ENCODE measurements at regions of chr3 and their contacts with region 1.

Region 1: GRCh38 chr3:98901392-98902350 is at the start of gene DCBLD2:
- DNase-seq: peak; percentile 93 to 99
- H3K4me3 ChIP-seq: peak within 1 kb of the TSS; percentile 90 to 94
- H3K27ac ChIP-seq: peak within 1 kb of the TSS; percentile 89 to 95
- H3K4me1 ChIP-seq: no peaks in the 10 kb centered on the region
- H3K27me3 ChIP-seq: no peaks in the 10 kb centered on the region
- CTCF ChIP-seq: no peak
- total RNA-seq, gene DCBLD2: 16.3 TPM

Region 2: DNA sequence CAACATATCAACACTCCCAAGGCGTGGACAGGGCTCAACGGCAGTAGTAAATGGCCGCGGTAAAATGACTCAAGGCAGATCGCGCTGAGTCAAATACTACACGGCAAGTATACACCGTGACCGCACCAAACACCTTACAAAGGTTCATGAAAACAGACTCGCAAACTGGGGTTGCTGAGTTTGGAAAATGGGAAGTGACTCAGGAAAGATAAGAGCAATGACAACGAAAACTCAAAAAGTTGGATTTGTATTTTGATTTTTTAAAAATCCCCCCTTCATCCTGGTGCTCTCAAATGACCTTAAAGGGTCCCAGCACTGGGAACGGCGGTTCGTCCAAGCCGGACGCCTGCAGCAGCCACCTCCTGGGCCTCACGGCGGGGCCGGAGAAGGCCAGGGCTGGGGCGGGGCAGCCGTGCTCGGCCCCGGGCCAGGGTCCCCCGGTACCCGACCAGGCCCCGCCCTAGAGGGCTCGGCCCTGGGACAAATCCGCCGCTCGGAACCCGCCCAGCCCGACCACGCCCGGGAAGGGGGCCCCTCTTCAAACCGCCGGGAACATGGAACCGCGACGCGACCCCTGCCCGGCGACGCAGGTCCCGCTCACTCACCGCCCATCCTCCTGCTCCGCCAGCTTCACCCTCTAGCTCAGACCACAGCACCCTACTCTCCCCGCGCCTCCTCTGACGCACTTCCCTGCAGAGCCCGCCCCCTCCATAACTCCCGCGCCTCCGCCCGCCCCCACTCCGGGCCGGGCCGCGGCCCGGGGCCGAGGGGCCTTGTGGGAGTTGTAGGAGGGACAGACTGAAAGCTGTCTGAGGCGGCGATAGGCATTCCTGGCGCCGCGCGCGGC is 379.2 kb before region 1 on chr3 and contains the start of gene CLDND1:
- intact Hi-C with region 1: loop called (anchors 2 kb)
- DNase-seq: peak; percentile 95 to 99
- H3K4me3 ChIP-seq: peak within 1 kb of the TSS; percentile 75 to 93
- H3K27ac ChIP-seq: peak within 1 kb of the TSS; percentile 92 to 95
- H3K4me1 ChIP-seq: peaks cover 0 to 2% of the 10 kb centered on the region in 2 donors
- H3K27me3 ChIP-seq: no peaks in the 10 kb centered on the region
- CTCF ChIP-seq: no peak
- total RNA-seq, gene CLDND1: 171 TPM

Region 3: DNA sequence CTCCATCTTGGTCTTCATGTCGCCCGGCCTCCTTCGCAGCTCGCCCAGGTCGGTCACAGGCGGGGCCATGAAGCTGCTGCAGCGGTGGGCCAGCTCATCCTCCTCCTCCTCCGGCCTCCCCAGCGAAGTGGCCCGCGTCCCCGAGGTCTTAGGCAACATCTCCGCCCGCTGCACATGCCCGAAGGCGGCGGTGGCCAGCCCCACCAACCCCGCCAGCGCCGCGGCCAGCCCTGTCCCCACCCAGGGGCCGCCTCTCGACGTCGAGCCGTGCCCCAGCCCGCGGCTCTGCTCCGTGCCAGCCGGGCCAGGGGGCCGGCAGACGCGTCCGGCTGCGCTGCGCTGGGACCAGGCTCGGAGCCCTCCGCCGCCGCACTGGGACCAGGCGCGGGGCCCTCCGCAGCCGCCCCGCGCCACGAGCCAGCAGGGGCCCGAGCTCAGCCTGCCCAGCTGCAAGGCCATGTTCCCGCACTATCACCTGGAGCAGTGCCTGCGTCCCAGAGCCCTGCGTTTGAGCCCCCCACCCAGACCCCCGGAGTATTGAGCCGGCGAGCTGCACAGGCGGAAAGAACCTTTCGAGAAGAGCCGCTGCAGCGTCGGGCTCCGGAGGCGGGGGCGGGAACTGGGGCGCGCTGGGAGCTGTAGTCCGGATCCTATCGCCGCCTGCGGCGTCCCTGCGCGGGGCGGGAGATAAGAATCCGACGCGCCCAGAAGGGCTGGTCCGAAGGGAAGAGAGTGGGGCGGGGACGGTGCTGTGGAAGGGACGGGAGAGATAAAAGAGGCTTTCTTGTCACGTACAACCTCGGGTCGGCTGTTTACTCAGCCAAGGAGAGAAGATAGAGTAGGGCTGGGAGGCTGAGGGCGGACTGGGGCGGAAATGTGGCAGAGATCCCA is 308.4 kb before region 1 on chr3 and contains the start of gene CPOX:
- intact Hi-C with region 1: loop called (anchors 5 kb)
- DNase-seq: peak; percentile 31 to 92
- H3K4me3 ChIP-seq: peak within 1 kb of the TSS; percentile 77 to 94
- H3K27ac ChIP-seq: peak within 1 kb of the TSS; percentile 83 to 91
- H3K4me1 ChIP-seq: peaks cover 0 to 12% of the 10 kb centered on the region in 2 donors
- H3K27me3 ChIP-seq: no peaks in the 10 kb centered on the region
- CTCF ChIP-seq: no peak
- total RNA-seq, gene CPOX: 34.8 TPM

Region 4: GRCh38 chr3:98855806-98856400 is 45.8 kb before region 1 on chr3:
- intact Hi-C with region 1: loop called (anchors 5 kb)
- DNase-seq: no peak
- H3K4me3 ChIP-seq: no peak overlapping the region
- H3K27ac ChIP-seq: no peak overlapping the region
- H3K4me1 ChIP-seq: peaks cover 4 to 6% of the 10 kb centered on the region in 2 donors
- H3K27me3 ChIP-seq: no peaks in the 10 kb centered on the region
- CTCF ChIP-seq: no peak

Region 5: DNA sequence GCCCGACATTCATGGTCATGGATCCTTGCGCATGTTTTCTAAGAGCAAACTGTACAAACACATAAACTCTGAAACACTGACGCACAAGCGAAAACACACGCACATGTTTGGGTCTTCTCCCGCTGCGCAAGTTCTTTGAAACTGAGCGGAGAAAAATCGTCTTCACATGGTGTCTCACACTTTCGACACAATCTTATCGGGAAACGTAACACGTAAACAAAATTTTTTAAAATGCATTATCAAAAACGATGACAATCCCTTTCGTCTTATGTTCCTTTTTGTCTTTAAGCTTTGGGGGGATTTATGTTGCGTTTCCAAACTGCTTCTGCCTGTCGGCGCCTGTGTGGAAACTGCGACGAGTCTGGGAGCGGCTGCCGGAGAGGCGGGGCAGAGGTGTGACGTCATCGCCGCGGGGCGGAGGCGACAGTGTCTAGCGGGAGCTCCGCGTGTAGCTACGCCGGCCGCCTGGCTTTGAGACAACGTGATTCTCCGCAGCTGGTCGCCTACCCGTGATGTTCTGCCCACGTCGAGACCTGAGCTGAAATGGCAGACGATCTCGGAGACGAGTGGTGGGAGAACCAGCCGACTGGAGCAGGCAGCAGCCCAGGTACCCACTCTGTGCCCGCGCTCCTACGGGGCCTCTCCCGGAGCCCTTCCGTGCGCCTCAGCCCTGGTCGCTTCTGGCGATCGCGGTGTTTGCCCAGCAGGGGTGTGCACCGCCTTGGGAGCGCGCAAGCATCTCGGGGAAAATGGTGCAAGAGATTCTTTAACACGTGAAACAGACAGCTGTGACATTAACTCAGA is 916.0 kb after region 1 on chr3 and contains the start of gene CMSS1:
- intact Hi-C with region 1: loop called (anchors 5 kb)
- DNase-seq: peak; percentile 55 to 96
- H3K4me3 ChIP-seq: peak within 1 kb of the TSS; percentile 71 to 79
- H3K27ac ChIP-seq: peak within 1 kb of the TSS; percentile 90
- H3K4me1 ChIP-seq: peaks cover 0 to 19% of the 10 kb centered on the region in 2 donors
- H3K27me3 ChIP-seq: no peaks in the 10 kb centered on the region
- CTCF ChIP-seq: peak; percentile 15 to 52 (median 38)
- total RNA-seq, gene CMSS1: 9.2 TPM